GM10248 (cell line): ENCODE measurements at regions of chr7 and their contacts with region 1.

Region 1: GRCh38 chr7:101138213-101138870 is 11.4 kb downstream of the SERPINE1 start:
- DNase-seq: peak; percentile 80
- CTCF ChIP-seq: peak; percentile 46

Region 2: GRCh38 chr7:100837099-100837836 is 301.1 kb before region 1 on chr7:
- CTCF ChIA-PET with region 1: no interaction called
- POLR2A ChIA-PET with region 1: no interaction called
- DNase-seq: peak; percentile 89
- CTCF ChIP-seq: no peak

Region 3: GRCh38 chr7:101009629-101010028 is 128.7 kb before region 1 on chr7:
- CTCF ChIA-PET with region 1: no interaction called
- POLR2A ChIA-PET with region 1: no interaction called
- DNase-seq: no peak
- CTCF ChIP-seq: no peak

Region 4: DNA sequence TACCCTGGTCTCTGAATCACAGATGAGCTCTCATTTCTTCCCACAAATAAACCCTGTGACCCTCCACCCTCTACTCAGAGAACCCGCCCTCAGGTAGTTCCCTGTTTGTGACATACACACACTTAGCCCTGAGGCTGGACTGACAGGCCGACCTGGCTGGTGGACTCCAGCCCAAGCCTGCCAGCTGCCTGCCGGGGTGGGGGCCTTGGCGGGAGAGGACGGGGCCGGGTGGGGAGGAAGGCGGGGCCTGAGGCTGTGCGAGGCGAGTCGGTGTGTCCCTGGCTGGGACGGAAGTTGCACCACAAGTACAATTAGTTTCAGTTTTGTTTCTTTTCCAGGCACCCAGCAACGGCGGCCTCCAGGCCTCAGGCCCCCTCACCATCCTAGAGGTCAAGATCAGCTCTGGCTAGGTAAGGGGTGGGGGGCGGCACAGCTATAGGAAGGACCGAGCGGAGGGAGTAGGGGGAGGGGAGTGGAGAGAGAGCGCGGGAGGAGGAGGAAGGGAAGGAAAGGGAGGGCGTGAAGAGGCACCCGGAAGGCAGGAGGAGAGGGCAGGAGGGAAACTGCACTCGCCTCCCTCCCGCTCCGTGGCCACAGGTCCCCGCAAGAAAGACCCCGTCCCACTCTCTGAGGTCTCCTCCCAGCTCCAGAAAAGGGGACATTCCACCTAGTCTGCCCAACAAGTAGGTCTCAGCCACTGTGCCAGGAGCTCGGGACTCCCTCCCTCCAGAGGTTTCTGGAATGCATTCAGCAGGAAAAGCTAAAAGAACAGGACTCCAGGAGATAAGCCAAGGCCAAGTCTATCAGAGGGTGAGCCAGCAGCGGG is 53.0 kb before region 1 on chr7 and contains the start of gene TRIM56:
- CTCF ChIA-PET with region 1: interaction called, 13 read pairs
- POLR2A ChIA-PET with region 1: no interaction called
- DNase-seq: peak; percentile 95
- CTCF ChIP-seq: no peak

Region 5: GRCh38 chr7:101114492-101114891 is 23.9 kb before region 1 on chr7:
- CTCF ChIA-PET with region 1: interaction called, 13 read pairs
- POLR2A ChIA-PET with region 1: no interaction called
- DNase-seq: no peak
- CTCF ChIP-seq: no peak

Region 6: GRCh38 chr7:101153969-101154692 is 15.8 kb after region 1 on chr7 and contains the start of gene AP1S1:
- CTCF ChIA-PET with region 1: interaction called, 56 read pairs
- POLR2A ChIA-PET with region 1: no interaction called
- DNase-seq: peak; percentile 99
- CTCF ChIP-seq: no peak

Region 7: GRCh38 chr7:101173752-101174244 is 35.5 kb after region 1 on chr7:
- CTCF ChIA-PET with region 1: interaction called, 27 read pairs
- POLR2A ChIA-PET with region 1: no interaction called
- DNase-seq: peak; percentile 86
- CTCF ChIP-seq: no peak

Region 8: DNA sequence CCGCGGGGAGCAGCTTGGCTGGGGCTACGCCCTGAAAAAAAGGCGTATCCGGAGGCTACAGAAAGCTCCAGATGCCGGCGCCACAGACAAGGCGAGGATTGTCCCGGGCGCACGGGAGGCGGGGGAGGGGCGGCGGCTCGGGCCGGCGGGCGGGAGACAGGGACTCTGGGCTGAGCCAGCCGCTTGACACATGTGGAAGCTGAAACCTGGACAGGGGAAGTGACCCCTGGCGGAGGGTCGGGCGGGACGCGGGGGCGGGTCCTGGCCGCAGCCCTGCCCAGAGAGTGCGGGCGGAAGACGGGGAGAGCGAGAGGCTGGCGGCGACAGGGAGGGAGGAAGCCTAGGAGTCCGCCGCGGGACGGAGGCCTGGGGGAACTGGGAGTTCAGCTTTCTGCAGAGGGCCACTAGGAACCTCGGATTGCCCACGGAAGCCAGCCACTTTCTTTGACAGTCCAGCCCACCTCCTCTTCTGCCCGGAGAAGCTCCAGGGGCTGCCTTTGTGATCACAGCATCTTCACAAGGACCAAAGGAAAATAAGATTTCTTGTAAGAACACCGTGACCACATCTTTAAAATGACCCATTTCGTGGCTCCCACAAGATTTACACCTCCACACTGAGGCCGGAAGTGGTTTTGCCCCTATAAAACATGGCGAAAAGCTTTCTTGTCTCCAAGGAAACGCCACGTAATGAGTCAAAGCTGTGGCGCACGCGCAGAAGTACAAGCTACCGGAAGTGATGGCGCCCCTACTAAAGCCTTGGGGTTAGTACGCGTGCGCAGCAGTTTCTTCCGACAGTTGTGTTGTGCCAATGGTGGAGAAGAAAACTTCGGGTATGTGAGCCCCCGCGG is 79.3 kb after region 1 on chr7 and contains the starts of genes PLOD3 and ZNHIT1:
- CTCF ChIA-PET with region 1: interaction called, 14 read pairs
- POLR2A ChIA-PET with region 1: no interaction called
- DNase-seq: peak; percentile 99
- CTCF ChIP-seq: peak; percentile 15

Region 9: DNA sequence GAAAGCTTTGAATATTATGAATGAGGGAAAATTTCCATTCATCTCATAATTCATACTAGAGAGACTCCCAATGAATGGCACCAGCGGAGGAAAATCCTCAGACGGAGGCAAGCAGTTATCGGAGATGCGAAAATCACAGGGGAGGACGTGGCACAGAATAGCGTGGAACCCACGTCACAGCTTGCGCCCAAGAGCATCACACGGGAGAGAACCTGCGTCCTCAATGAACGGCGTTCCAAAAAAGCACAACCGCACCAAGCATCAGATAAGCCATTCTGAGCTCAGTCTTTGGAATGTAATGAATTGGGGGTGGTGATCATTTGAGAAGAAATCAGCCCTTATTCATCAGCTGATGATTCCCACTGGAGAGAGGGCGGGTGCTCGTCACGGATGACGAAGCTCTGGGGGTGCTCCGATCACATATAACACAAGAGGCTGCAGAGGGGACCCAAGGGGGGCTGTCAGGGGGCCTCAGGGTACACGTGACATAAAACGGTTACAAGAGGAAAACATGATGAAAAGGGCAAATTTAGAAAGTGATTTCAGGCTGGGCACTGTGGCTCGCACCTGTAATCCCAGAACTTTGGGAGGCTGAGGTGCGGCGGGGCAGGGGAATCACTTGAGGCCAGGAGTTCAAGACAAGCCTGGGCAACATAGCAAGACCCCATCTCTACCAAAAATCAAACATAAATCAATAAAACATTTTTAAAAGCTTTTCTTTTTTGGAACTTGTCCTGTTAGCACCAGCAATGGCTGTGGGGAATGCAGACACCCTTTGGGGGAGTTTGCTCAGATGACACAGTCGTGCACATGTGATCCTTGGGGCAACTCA is 140.3 kb after region 1 on chr7:
- CTCF ChIA-PET with region 1: interaction called, 86 read pairs
- POLR2A ChIA-PET with region 1: no interaction called
- DNase-seq: no peak
- CTCF ChIP-seq: no peak

Region 10: DNA sequence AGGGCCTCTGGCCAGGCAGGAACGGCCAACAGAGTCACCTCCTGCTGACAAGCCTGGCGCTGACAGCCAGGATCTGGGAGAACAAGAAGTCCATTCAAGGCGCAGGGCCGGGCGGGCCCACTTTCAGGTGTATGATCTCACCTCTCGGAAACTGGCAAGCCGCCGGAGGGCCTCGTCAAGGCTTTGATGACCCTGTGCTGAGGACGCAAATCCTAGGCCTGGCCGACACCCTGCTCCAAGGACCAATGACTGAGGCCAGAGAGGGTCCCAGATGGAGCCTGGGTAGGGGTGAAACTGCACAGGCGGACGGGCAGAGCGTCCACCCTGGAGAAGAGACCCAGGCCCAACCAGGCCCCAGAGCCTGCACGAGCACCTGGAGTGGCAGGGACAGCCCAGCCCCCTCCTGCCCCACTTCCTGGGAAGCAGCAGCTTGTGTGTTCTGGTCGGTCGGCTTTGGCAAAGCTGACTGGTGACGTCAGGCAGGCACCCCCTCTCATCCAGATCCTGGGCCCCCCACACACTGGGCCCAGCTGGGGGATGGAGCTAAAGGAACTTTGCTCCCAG is 460.2 kb after region 1 on chr7:
- CTCF ChIA-PET with region 1: no interaction called
- POLR2A ChIA-PET with region 1: no interaction called
- DNase-seq: no peak
- CTCF ChIP-seq: no peak

Region 11: GRCh38 chr7:102077081-102077480 is 938.7 kb after region 1 on chr7:
- CTCF ChIA-PET with region 1: no interaction called
- POLR2A ChIA-PET with region 1: no interaction called
- DNase-seq: no peak
- CTCF ChIP-seq: no peak